H1 (cell line): ENCODE measurements at regions of chr17 and their contacts with region 1.

Region 1: GRCh38 chr17:8209909-8210760 is at the start of gene AURKB:
- DNase-seq: peak in 1 of 2 experiments; percentile 97
- H3K4me3 ChIP-seq: peak within 1 kb of the TSS; percentile 67 to 93 (median 80)
- H3K27ac ChIP-seq: peak within 1 kb of the TSS; percentile 92; the same call in 1 of the 2 replicates
- H3K4me1 ChIP-seq: peaks cover 0 to 4% (median under 1%) of the 10 kb centered on the region in 4 experiments; a peak in 2 of 7 replicates
- H3K27me3 ChIP-seq: no peaks in the 10 kb centered on the region
- CTCF ChIP-seq: no peak; a peak in 1 of 4 replicates
- EP300 ChIP-seq: no peak
- POLR2A ChIP-seq: peak; percentile 90 to 98
- RAD21 ChIP-seq: no peak
- total RNA-seq, gene AURKB: 154 and 160 TPM in 2 replicates

Region 2: GRCh38 chr17:8189711-8190477 is 20.2 kb before region 1 on chr17 and contains the start of gene BORCS6:
- CTCF ChIA-PET with region 1: interaction called, 4 read pairs
- POLR2A ChIA-PET with region 1: interaction called, 373 read pairs
- DNase-seq: peak; percentile 87
- H3K4me3 ChIP-seq: peak within 1 kb of the TSS; percentile 59 to 89 (median 78)
- H3K27ac ChIP-seq: no peak within 1 kb of the TSS
- H3K4me1 ChIP-seq: peaks cover 4 to 21% (median 10%) of the 10 kb centered on the region in 4 experiments; a peak in 6 of 7 replicates
- H3K27me3 ChIP-seq: peaks cover 2 to 17% (median 11%) of the 10 kb centered on the region in 4 experiments
- CTCF ChIP-seq: no peak
- EP300 ChIP-seq: no peak
- POLR2A ChIP-seq: no peak
- RAD21 ChIP-seq: no peak
- total RNA-seq, gene BORCS6: 3.6 and 4.6 TPM in 2 replicates

Region 3: GRCh38 chr17:8237175-8237574 is 27.0 kb after region 1 on chr17:
- CTCF ChIA-PET with region 1: no interaction called
- POLR2A ChIA-PET with region 1: no interaction called
- DNase-seq: no peak
- H3K4me3 ChIP-seq: no peak overlapping the region
- H3K27ac ChIP-seq: no peak overlapping the region
- H3K4me1 ChIP-seq: no peaks in the 10 kb centered on the region
- H3K27me3 ChIP-seq: no peaks in the 10 kb centered on the region
- CTCF ChIP-seq: no peak
- EP300 ChIP-seq: no peak
- POLR2A ChIP-seq: no peak
- RAD21 ChIP-seq: no peak

Region 4: DNA sequence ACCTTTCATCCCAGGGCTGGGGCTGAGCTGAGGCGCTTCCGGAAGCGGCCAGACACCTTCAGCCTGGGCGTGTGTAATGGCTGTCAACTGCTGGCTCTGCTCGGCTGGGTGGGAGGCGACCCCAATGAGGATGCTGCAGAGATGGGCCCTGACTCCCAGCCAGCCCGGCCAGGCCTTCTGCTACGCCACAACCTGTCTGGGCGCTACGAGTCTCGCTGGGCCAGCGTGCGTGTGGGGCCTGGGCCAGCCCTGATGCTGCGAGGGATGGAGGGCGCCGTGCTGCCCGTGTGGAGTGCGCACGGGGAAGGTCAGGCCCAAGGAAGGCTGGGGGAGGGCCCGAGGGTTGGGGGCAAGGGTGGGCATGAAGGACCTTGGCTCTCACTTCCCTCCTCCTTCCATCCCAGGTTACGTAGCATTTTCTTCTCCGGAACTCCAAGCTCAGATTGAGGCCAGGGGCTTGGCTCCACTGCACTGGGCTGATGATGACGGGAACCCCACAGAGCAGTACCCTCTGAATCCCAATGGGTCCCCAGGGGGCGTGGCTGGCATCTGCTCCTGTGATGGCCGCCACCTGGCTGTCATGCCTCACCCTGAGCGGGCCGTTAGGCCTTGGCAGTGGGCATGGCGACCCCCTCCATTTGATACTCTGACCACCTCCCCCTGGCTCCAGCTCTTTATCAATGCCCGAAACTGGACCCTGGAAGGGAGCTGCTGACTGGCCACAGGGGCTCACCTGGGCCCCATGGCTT is 58.6 kb after region 1 on chr17:
- CTCF ChIA-PET with region 1: no interaction called
- POLR2A ChIA-PET with region 1: no interaction called
- DNase-seq: no peak
- H3K4me3 ChIP-seq: no peak overlapping the region
- H3K27ac ChIP-seq: no peak overlapping the region
- H3K4me1 ChIP-seq: no peaks in the 10 kb centered on the region
- H3K27me3 ChIP-seq: no peaks in the 10 kb centered on the region
- CTCF ChIP-seq: no peak
- EP300 ChIP-seq: no peak
- POLR2A ChIP-seq: no peak
- RAD21 ChIP-seq: no peak

Region 5: GRCh38 chr17:8294814-8295316 is 84.7 kb after region 1 on chr17:
- CTCF ChIA-PET with region 1: no interaction called
- POLR2A ChIA-PET with region 1: interaction called, 11 read pairs
- DNase-seq: no peak
- H3K4me3 ChIP-seq: peak overlapping the region; percentile 64 to 82 (median 76); a peak in 7 of 8 replicates
- H3K27ac ChIP-seq: no peak overlapping the region
- H3K4me1 ChIP-seq: peaks cover 0 to 8% (median 5%) of the 10 kb centered on the region in 4 experiments; a peak in 5 of 7 replicates
- H3K27me3 ChIP-seq: peaks cover 0 to 2% (median 0%) of the 10 kb centered on the region in 4 experiments; a peak in 1 of 7 replicates
- CTCF ChIP-seq: no peak
- EP300 ChIP-seq: no peak
- POLR2A ChIP-seq: no peak
- RAD21 ChIP-seq: no peak